Posterior vena cava (tissue), 2 donors: ENCODE measurements at regions of chr1 and their contacts with region 1.

Region 1: DNA sequence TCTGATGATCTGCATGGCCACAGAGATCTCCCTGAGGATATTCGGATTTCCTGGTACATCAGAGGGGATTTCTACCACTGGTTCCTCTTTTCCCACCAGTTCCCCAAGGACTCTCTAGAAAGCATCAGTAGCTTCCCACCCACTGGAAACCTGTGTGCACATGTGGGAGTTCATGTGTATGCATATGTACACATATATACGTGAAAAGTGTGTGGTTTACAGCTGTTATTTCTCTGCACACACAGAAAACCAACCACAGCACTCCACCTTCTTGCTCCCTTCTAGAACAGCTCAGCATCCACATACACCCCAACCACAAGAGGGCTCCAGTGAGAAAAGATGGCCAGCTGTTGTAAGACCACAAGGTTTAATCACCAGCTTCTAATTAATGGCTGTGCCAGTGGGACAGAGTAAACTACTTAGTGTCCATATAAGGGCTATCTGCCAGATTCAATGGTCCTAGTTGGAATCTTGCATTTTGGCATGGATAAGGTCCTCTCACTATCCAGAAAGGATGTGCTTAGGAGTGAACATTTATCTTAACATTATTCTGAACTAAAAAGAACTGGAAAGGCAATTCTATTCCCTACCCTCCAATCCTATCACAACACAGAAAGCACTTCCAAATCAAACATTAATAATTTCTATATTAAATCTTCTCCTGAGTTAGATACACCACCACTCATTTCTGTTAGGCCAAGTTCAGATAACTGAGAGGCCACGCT is 24.1 kb downstream of the GPR3 start:
- DNase-seq: peak; percentile 4

Region 2: GRCh38 chr1:27589841-27590426 is 173.4 kb after region 1 on chr1:
- intact Hi-C with region 1: loop called in 1 of 2 experiments (anchors 5 kb)
- DNase-seq: no peak